ENCODE measurements at regions of chr6 and their contacts with region 1.

Region 1: GRCh38 chr6:127464881-127465459 is 5.8 kb upstream of the KIAA0408 start:
- DNase-seq: peak; percentile 59 to 81
- H3K4me3 ChIP-seq: no peak overlapping the region
- H3K27ac ChIP-seq: peak overlapping the region; percentile 72 to 75
- H3K4me1 ChIP-seq: peaks cover 0 to 35% (median 18%) of the 10 kb centered on the region in 4 donors
- H3K27me3 ChIP-seq: no peaks in the 10 kb centered on the region
- CTCF ChIP-seq: peak; percentile 72 to 79

Region 2: GRCh38 chr6:127436578-127437110 is 28.3 kb before region 1 on chr6:
- intact Hi-C with region 1: no loop called
- DNase-seq: no peak
- H3K4me3 ChIP-seq: no peak overlapping the region
- H3K27ac ChIP-seq: no peak overlapping the region
- H3K4me1 ChIP-seq: no peaks in the 10 kb centered on the region
- H3K27me3 ChIP-seq: no peaks in the 10 kb centered on the region
- CTCF ChIP-seq: no peak

Region 3: GRCh38 chr6:127516666-127517273 is 51.8 kb after region 1 on chr6:
- intact Hi-C with region 1: loop called (anchors 5 kb)
- DNase-seq: no peak
- H3K4me3 ChIP-seq: peak overlapping the region; percentile 59 to 65
- H3K27ac ChIP-seq: no peak overlapping the region
- H3K4me1 ChIP-seq: peaks cover 0 to 36% (median 22%) of the 10 kb centered on the region in 4 donors
- H3K27me3 ChIP-seq: peaks cover 0 to 40% of the 10 kb centered on the region in 2 donors
- CTCF ChIP-seq: peak; percentile 46 to 57

Region 4: GRCh38 chr6:127539272-127539671 is 74.3 kb after region 1 on chr6:
- intact Hi-C with region 1: loop called (anchors 5 kb)
- DNase-seq: no peak
- H3K4me3 ChIP-seq: no peak overlapping the region
- H3K27ac ChIP-seq: no peak overlapping the region
- H3K4me1 ChIP-seq: no peaks in the 10 kb centered on the region
- H3K27me3 ChIP-seq: no peaks in the 10 kb centered on the region
- CTCF ChIP-seq: peak; percentile 41 to 46